CD8-positive, alpha-beta memory T cell (primary cell): ENCODE measurements at regions of chr11 and their contacts with region 1.

Region 1: DNA sequence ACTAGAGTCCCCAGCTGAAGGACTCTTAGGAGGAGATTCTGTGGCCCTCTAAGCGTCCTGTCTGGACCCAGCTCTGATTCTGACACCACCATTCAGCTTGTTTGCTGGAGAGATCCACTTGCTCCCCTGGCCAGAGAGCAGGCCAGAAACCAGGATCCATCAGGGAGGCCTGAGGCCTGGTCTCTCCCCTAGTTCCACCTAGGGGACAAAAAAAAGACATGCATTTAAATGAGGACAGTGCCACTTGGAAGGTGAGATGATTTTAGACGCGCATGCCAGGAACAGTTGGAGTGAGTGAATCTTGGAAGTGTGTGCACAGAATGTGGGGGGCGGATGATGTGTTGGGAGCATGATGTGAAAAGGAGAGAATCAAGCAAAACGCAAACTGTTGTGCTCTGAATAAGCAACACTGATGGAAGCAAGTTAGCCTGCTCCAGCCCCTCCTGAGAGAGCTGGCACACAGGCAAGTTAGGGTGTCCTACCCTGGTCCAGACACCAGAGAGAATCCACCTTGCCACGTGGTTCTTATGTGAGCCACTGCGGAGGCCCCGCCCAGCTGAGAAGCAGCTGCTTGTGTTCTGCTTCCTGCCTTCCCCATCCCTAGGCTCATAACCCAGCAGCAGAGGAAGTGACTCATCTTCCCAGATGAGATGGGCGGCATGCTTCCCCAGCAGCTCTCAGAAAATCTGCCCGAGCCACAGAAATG is 8.0 kb upstream of the SLCO2B1 start:
- DNase-seq: peak; percentile 43 to 78 (median 46)
- H3K4me3 ChIP-seq: peak overlapping the region; percentile 16
- H3K4me3 Mint-ChIP-seq: peak overlapping the region in 6 of 7 donors; percentile 22 to 78 (median 71)
- H3K27ac ChIP-seq: peak overlapping the region; percentile 10
- H3K27ac Mint-ChIP-seq: peak overlapping the region; percentile 57 to 95 (median 78)
- H3K4me1 ChIP-seq: peaks cover 37% of the 10 kb centered on the region
- H3K4me1 Mint-ChIP-seq: peaks cover 39 to 42% (median 40%) of the 10 kb centered on the region in 3 donors
- H3K27me3 ChIP-seq: no peaks in the 10 kb centered on the region
- H3K27me3 Mint-ChIP-seq: peaks cover 2% of the 10 kb centered on the region in 2 donors

Region 2: DNA sequence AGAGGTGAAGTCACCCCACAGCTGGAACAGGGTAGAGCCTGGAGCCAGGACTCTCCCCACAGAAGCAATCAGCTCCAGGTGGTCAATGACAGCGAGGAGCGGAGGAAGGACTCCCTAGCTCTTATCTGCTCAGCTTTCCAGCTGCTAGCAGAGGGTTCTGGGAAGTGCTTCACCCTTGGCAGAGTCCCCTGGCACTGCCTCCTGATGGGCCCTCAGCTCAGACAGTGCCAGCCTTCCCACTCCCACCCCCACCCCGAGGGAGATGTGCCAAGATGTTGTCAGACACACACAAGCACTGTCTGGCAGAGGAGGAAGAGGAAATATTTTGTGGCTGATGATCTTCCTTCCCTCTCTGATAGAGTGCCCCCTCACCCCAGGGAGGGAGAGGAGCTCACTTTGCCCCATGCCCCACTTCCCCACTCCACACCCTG is 52.3 kb after region 1 on chr11:
- CTCF ChIA-PET with region 1: interaction called, 201 read pairs
- POLR2A ChIA-PET with region 1: no interaction called
- DNase-seq: no peak
- H3K4me3 ChIP-seq: no peak overlapping the region
- H3K4me3 Mint-ChIP-seq: no peak overlapping the region
- H3K27ac ChIP-seq: no peak overlapping the region
- H3K27ac Mint-ChIP-seq: no peak overlapping the region
- H3K4me1 ChIP-seq: no peaks in the 10 kb centered on the region
- H3K4me1 Mint-ChIP-seq: no peaks in the 10 kb centered on the region
- H3K27me3 ChIP-seq: no peaks in the 10 kb centered on the region
- H3K27me3 Mint-ChIP-seq: peaks cover 5% of the 10 kb centered on the region in 2 donors

Region 3: GRCh38 chr11:75223954-75224643 is 81.2 kb after region 1 on chr11:
- CTCF ChIA-PET with region 1: interaction called, 12 read pairs
- POLR2A ChIA-PET with region 1: no interaction called
- DNase-seq: no peak
- H3K4me3 ChIP-seq: no peak overlapping the region
- H3K4me3 Mint-ChIP-seq: no peak overlapping the region
- H3K27ac ChIP-seq: no peak overlapping the region
- H3K27ac Mint-ChIP-seq: peak overlapping the region in 1 of 8 donors; percentile 75
- H3K4me1 ChIP-seq: no peaks in the 10 kb centered on the region
- H3K4me1 Mint-ChIP-seq: no peaks in the 10 kb centered on the region
- H3K27me3 ChIP-seq: no peaks in the 10 kb centered on the region
- H3K27me3 Mint-ChIP-seq: peaks cover 4 to 6% of the 10 kb centered on the region in 2 donors

Region 4: GRCh38 chr11:75241036-75241905 is 98.4 kb after region 1 on chr11:
- CTCF ChIA-PET with region 1: interaction called, 419 read pairs
- POLR2A ChIA-PET with region 1: interaction called, 4 read pairs
- DNase-seq: peak; percentile 77 to 84 (median 83)
- H3K4me3 ChIP-seq: no peak overlapping the region
- H3K4me3 Mint-ChIP-seq: peak overlapping the region; percentile 68 to 89 (median 74)
- H3K27ac ChIP-seq: no peak overlapping the region
- H3K27ac Mint-ChIP-seq: no peak overlapping the region
- H3K4me1 ChIP-seq: peaks cover 8% of the 10 kb centered on the region
- H3K4me1 Mint-ChIP-seq: peaks cover 0 to 23% (median 5%) of the 10 kb centered on the region in 3 donors
- H3K27me3 ChIP-seq: peaks cover 20% of the 10 kb centered on the region
- H3K27me3 Mint-ChIP-seq: peaks cover 25 to 49% of the 10 kb centered on the region in 2 donors